ENCODE measurements at regions of chr16 and their contacts with region 1.

Region 1: GRCh38 chr16:85055503-85056210 is 28.1 kb downstream of the KIAA0513 start:
- DNase-seq: peak in 3 of 4 experiments; percentile 39 to 83 (median 58)
- ATAC-seq: peak; percentile 73
- H3K4me3 ChIP-seq: peak overlapping the region; percentile 3; the same call in 1 of the 2 replicates
- H3K27ac ChIP-seq: peak overlapping the region; percentile 67
- H3K4me1 ChIP-seq: peaks cover 37 to 43% of the 10 kb centered on the region in 2 experiments
- H3K27me3 ChIP-seq: no peaks in the 10 kb centered on the region
- CTCF ChIP-seq: no peak
- EP300 ChIP-seq: peak; percentile 68
- POLR2A ChIP-seq: no peak
- RAD21 ChIP-seq: peak; percentile 26 to 38; a peak in 2 of 4 replicates

Region 2: DNA sequence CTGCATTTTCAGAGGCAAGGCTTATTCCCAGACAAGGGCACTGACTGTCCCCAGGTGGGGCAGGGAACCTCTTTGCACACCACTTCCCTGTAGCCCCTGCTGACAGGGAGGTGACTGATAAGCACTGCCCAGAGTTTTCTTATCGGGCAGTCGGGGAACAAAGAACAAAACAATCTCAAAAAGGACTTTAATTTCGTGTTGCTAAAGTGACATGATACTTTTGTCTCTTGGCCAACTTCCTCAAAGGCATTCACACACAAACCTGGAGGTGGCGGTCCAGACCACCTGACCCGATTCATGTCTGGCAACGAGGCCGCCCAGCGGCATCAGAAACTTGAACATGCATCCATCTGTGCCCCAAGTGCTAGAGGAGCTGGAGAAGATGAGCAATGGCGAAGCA is 73.2 kb before region 1 on chr16:
- CTCF ChIA-PET with region 1: no interaction called
- POLR2A ChIA-PET with region 1: no interaction called
- in situ Hi-C with region 1: no loop called
- intact Hi-C with region 1: loop called (anchors 2 kb)
- DNase-seq: peak; percentile 52 to 70 (median 56)
- ATAC-seq: peak; percentile 75
- H3K4me3 ChIP-seq: no peak overlapping the region
- H3K27ac ChIP-seq: no peak overlapping the region
- H3K4me1 ChIP-seq: peaks cover 17 to 28% of the 10 kb centered on the region in 2 experiments
- H3K27me3 ChIP-seq: no peaks in the 10 kb centered on the region
- CTCF ChIP-seq: peak; percentile 63 to 82 (median 81)
- EP300 ChIP-seq: no peak; the same call in 1 of the 2 replicates
- POLR2A ChIP-seq: no peak
- RAD21 ChIP-seq: peak; percentile 73 to 85

Region 3: DNA sequence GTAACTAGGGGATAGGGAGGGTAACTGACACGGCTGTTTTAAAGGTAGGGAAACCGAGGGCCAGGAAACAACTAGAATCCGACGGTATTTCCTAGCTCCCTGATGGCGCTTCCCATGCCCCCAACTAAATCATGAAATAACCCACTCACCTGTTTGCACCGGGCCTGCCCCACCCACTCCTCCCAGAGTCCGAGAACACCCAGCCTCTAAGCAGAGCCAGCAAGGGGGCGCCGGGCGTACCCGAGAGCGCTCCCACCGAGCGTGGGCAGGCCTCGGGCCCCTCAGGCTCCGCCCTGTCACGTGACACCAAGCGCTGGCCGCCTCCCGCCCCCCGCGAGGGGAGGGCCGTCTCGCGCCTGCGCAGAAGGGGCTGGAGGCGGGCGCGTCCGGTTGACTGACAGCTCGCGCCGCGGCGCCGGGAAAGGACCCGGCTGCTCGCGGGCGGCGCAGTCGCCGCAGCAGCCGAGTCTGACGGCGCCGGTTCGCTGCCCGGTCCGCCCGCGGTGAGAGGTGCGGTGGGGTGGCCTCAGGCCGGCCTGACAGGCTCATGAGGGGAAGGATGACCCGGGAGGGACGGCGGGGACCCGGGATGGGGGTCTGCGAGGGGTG is 28.2 kb before region 1 on chr16 and contains the start of gene KIAA0513:
- CTCF ChIA-PET with region 1: no interaction called
- POLR2A ChIA-PET with region 1: interaction called, 4 read pairs
- in situ Hi-C with region 1: no loop called
- intact Hi-C with region 1: loop called (anchors 2 kb)
- DNase-seq: peak; percentile 98 to 100 (median 100)
- ATAC-seq: peak; percentile 92
- H3K4me3 ChIP-seq: peak within 1 kb of the TSS; percentile 75
- H3K27ac ChIP-seq: peak within 1 kb of the TSS; percentile 57
- H3K4me1 ChIP-seq: peaks cover 33 to 39% of the 10 kb centered on the region in 2 experiments
- H3K27me3 ChIP-seq: no peaks in the 10 kb centered on the region
- CTCF ChIP-seq: peak in 2 of 3 experiments; percentile 48 to 60; a peak in 5 of 6 replicates
- EP300 ChIP-seq: peak; percentile 45
- POLR2A ChIP-seq: peak; percentile 83
- RAD21 ChIP-seq: peak; percentile 38 to 47; a peak in 3 of 4 replicates
- polyA plus RNA-seq, gene KIAA0513: 0.18 to 0.36 TPM

Region 4: GRCh38 chr16:85067015-85067414 is 11.4 kb after region 1 on chr16:
- CTCF ChIA-PET with region 1: no interaction called
- POLR2A ChIA-PET with region 1: interaction called, 14 read pairs
- in situ Hi-C with region 1: no loop called
- intact Hi-C with region 1: no loop called
- DNase-seq: no peak
- ATAC-seq: no peak
- H3K4me3 ChIP-seq: no peak overlapping the region
- H3K27ac ChIP-seq: no peak overlapping the region
- H3K4me1 ChIP-seq: peaks cover 5 to 6% of the 10 kb centered on the region in 2 experiments; a peak in 4 of 5 replicates
- H3K27me3 ChIP-seq: no peaks in the 10 kb centered on the region
- CTCF ChIP-seq: no peak
- EP300 ChIP-seq: no peak
- POLR2A ChIP-seq: no peak
- RAD21 ChIP-seq: no peak